Panc1 (cell line): ENCODE measurements at regions of chr7 and their contacts with region 1.

Region 1: DNA sequence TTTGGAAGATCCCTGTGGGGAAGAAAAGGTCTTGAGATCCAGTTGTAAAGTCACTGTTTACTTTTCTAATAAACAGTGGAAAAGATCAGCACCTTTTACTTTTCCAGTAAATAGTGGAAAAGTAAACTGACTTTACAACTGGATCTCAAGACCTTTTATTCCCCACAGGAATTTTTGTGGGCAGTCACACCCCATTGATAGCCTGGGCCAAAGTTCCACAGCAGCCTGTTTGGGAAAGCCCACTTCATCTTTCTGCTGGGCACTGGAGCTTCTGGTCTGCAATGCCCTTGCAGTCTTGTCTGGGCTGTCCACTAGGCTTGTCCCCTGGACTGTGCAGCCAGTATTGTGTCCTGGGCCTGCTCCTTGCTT is 50.2 kb downstream of the ADCY1 start:
- DNase-seq: no peak
- ATAC-seq: 0 out of 2 replicates have a peak, but pooled peaks have one; percentile 49
- H3K4me3 ChIP-seq: no peak overlapping the region
- H3K27ac ChIP-seq: no peak overlapping the region
- H3K4me1 ChIP-seq: no peaks in the 10 kb centered on the region
- H3K27me3 ChIP-seq: no peaks in the 10 kb centered on the region
- CTCF ChIP-seq: no peak

Region 2: DNA sequence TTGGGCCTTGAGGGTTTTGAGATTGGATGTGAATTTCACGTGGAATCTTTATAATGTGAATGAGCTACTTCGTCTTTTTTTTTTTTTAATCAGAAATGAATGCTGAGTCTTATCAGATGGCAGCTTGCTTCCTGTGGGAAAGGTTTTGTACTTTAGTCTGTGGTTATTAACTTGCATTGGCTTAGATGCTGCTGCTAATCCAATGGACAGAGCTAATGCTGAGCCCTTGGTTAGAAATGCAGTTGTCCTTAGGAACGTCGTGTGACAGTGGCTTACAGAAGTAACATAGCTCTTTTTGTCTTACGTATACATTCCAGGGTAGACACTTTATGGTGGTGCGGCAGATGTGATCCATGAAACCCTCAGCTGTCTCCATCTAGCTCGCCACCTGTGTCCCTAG is 17.4 kb before region 1 on chr7:
- CTCF ChIA-PET with region 1: no interaction called
- POLR2A ChIA-PET with region 1: interaction called, 11 read pairs
- in situ Hi-C with region 1: no loop called
- intact Hi-C with region 1: no loop called
- DNase-seq: no peak
- ATAC-seq: no peak
- H3K4me3 ChIP-seq: no peak overlapping the region
- H3K27ac ChIP-seq: no peak overlapping the region
- H3K4me1 ChIP-seq: no peaks in the 10 kb centered on the region
- H3K27me3 ChIP-seq: no peaks in the 10 kb centered on the region
- CTCF ChIP-seq: no peak